Esophagus muscularis mucosa (tissue), 4 donors: ENCODE measurements at regions of chr3 and their contacts with region 1.

Region 1: DNA sequence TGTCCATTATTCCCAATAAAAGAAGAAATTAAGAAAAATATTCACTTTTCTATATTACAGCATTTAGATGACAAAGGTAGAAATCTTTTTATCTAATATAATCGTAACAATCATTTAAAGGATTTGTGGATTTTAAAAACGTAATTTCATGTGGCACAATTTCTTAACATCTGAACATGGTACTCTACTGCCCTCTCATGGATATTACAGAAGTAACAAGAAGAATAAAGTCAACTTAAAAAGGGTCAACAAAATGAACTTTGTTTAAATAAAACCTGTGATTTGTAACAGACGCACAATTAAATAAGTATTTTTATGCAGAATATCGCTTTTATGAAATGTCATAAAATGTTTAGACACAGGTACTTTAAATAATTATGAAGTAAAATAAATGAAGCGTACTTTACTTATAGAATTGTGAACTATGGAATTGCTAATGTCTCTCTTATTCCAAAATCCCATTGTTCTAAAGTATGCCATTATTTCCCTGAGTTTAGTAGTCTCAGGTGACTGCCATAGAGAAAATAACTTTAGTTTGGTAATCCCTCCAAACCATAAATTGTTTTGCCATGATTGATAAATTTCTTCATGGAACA is 366.8 kb upstream of the ZNF385D start:
- DNase-seq: no peak
- H3K4me3 ChIP-seq: no peak overlapping the region
- H3K27ac ChIP-seq: no peak overlapping the region
- H3K4me1 ChIP-seq: no peaks in the 10 kb centered on the region
- H3K27me3 ChIP-seq: no peaks in the 10 kb centered on the region
- CTCF ChIP-seq: peak; percentile 64 to 70 (median 67)
- EP300 ChIP-seq: no peak
- POLR2A ChIP-seq: no peak

Region 2: DNA sequence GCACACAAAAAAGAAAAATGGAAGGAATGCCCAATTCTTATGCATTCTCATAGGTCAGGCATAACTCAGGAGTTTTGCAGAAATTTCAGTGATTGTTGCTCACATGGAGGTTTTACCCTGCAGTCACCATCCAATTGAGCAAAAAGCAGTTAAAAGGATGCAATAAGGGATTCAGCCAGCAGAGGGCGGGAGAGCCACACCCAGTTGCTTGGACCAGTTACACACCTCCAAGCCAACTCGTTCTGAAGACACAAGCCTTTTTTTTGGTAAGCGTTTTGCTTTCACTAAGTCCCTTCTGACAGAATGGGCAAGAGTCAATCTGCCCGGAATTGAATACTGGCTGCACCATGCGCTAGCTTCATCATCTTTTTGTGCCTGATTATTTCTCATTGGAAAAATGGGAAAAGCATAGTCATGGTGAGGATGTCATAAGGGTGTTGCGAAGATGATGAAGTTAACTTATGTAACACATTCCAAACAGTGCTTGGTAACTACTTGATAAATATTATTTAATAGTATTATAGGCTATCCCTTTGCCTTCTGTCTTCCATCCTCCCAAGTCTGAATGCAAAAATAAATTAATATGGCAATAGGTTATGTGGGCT is 1777.4 kb before region 1 on chr3:
- intact Hi-C with region 1: loop called (anchors 10 kb)
- DNase-seq: peak; percentile 94
- H3K4me3 ChIP-seq: peak overlapping the region; percentile 11 to 32 (median 20)
- H3K27ac ChIP-seq: peak overlapping the region in 1 of 4 donors; percentile 15
- H3K4me1 ChIP-seq: peaks cover 0 to 12% (median 6%) of the 10 kb centered on the region in 4 donors
- H3K27me3 ChIP-seq: no peaks in the 10 kb centered on the region
- CTCF ChIP-seq: peak; percentile 80 to 96 (median 89)
- EP300 ChIP-seq: no peak
- POLR2A ChIP-seq: no peak

Region 3: DNA sequence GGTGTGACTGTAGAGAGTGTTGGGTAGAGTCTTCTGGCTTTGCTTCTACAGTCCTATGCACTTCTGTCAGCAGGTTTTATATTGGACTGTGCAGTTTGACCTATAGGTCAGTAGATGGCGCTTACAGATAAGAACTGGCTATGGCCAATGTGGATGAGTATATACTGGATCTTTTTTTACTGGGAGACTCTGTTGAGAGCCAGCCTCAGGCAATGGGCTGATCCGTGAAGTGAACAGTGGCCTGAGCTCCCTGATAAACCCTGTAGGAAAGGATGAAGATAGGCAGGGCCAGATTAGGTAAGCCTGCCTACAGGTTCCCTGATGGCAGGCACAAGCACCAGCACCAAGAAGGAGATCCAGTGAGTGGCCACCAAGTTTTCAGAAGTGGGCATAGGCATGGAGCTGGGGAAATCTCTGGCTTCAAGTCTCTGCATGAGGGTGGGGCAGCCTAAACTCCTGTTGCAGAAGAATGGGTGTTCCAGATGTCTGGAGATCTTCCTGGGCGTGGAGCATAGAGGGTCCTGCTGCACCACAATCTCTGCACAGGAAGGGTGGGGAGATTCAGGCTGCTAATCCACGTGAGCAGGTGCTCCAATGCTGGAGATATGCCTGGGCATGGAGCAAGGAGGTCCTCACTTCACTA is 1605.9 kb before region 1 on chr3:
- intact Hi-C with region 1: loop called (anchors 5 kb)
- DNase-seq: no peak
- H3K4me3 ChIP-seq: no peak overlapping the region
- H3K27ac ChIP-seq: no peak overlapping the region
- H3K4me1 ChIP-seq: no peaks in the 10 kb centered on the region
- H3K27me3 ChIP-seq: no peaks in the 10 kb centered on the region
- CTCF ChIP-seq: peak; percentile 66 to 69 (median 66)
- EP300 ChIP-seq: no peak
- POLR2A ChIP-seq: no peak

Region 4: GRCh38 chr3:21752749-21753347 is 365.0 kb before region 1 on chr3:
- intact Hi-C with region 1: loop called (anchors 5 kb)
- DNase-seq: no peak
- H3K4me3 ChIP-seq: no peak overlapping the region
- H3K27ac ChIP-seq: peak overlapping the region in 1 of 4 donors; percentile 84
- H3K4me1 ChIP-seq: peaks cover 12 to 40% (median 33%) of the 10 kb centered on the region in 4 donors
- H3K27me3 ChIP-seq: no peaks in the 10 kb centered on the region
- CTCF ChIP-seq: peak; percentile 74 to 78 (median 74)
- EP300 ChIP-seq: no peak
- POLR2A ChIP-seq: no peak

Region 5: DNA sequence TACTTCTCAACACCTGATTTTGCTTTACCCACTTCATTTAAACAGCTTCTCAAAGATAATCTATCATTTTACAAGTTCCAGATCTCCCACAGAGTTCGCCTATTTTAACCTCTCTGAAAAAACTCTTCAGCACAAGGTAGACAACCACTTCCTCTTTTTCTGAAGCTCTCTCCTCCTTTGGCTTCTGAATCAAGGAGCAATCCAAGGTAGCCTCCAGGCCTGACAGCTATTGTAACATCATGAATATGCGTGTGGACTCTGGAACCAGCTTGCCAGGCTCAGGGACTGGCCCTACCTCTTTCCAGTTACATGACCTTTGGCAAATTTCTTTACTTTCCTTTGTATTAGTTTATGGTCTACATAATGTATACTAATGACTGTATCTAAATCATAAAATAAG is 39.0 kb after region 1 on chr3:
- intact Hi-C with region 1: no loop called
- DNase-seq: no peak
- H3K4me3 ChIP-seq: no peak overlapping the region
- H3K27ac ChIP-seq: no peak overlapping the region
- H3K4me1 ChIP-seq: peaks cover 0 to 10% (median 1%) of the 10 kb centered on the region in 4 donors
- H3K27me3 ChIP-seq: no peaks in the 10 kb centered on the region
- CTCF ChIP-seq: no peak
- EP300 ChIP-seq: no peak
- POLR2A ChIP-seq: no peak